HEK293 (cell line): ENCODE measurements at regions of chr7 and their contacts with region 1.

Region 1: DNA sequence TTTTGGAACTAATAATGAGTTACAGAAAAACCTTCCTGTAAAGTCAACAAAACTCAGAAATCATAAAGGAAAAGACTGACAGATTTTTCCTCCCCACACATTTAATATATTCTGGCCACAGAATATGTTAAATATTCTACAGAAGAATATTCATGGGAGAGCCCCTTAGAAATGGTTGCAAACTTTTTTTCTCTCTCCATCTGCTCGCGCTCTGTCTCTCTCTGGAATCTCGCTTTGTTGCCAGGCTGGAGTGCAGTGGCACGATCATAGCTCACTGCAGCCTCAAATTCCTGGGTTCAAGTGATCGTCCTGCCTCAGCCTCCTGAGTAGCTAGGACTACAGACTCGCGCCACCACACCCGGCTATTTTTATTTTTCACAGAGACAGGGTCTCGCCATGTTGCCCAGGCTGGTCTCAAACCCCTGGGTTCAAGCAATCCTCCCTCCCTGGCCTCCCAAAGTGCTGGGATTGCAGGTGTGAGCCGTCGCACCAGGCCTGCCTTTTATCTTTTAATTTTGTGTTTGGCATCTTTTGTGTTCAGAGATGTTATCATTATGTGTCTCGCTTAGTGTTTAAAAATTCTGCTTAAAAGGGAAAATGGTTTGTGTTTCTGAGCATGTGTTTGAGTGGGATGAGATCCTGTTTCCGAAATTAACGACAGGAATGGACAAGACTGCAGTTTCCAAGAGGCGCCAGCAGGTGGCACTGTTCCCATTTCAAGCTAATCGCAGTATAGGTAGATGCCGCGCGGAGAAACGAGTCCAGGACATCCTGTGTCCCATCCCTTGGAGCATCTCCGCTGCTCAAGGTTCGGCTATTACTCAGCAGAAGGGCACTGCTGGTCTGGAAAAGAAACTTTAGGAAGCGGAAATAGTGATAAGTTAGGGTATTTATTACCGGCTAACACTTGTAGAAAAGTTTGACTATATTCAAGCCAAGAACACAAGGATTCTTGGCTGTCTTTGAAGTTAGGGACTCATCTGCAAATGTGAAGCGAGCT is 23.1 kb upstream of the ST7 start:
- H3K4me3 ChIP-seq: no peak overlapping the region
- H3K27ac ChIP-seq: no peak overlapping the region
- H3K4me1 ChIP-seq: no peaks in the 10 kb centered on the region
- CTCF ChIP-seq: peak; percentile 69; the same call in 1 of the 2 replicates

Region 2: DNA sequence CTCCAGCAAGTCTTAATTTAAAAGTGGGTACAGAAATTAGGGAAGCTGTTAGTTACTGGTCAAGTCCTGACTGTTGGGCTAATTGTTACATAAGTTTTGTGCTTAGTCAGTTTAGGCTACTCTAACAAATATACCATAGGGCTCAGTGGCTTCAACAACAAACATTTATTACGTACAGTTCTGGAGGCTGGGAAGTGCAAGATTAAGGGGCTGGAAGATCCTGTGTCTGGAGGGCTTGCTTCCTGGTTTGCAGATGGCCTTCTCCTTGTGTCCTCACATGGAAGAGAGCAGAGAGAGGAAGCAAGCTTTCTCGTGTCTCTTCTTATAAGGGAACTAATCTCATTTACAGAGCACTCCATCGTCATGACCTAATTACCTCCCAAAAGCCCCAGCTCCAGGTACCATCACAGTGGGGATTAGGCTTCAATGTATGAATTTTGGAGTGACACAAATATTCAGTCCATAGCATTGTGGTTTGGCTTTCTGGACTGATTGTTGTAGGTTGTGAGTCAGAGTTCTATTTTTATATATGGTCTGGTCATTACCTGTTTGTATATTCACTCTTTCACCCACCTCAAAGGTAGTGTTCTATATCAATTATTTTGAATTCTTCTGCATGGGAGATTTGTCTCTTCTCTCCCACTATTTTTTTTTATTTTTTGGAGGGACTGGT is 40.2 kb after region 1 on chr7:
- CTCF ChIA-PET with region 1: no interaction called
- POLR2A ChIA-PET with region 1: no interaction called
- H3K4me3 ChIP-seq: no peak overlapping the region
- H3K27ac ChIP-seq: no peak overlapping the region
- H3K4me1 ChIP-seq: no peaks in the 10 kb centered on the region
- CTCF ChIP-seq: no peak

Region 3: GRCh38 chr7:117119192-117119924 is 189.1 kb after region 1 on chr7:
- CTCF ChIA-PET with region 1: interaction called, 32 read pairs
- POLR2A ChIA-PET with region 1: no interaction called
- H3K4me3 ChIP-seq: no peak overlapping the region
- H3K27ac ChIP-seq: no peak overlapping the region
- H3K4me1 ChIP-seq: peaks cover 11% of the 10 kb centered on the region; the same call in 1 of the 2 replicates
- CTCF ChIP-seq: peak; percentile 51; the same call in 1 of the 2 replicates

Region 4: DNA sequence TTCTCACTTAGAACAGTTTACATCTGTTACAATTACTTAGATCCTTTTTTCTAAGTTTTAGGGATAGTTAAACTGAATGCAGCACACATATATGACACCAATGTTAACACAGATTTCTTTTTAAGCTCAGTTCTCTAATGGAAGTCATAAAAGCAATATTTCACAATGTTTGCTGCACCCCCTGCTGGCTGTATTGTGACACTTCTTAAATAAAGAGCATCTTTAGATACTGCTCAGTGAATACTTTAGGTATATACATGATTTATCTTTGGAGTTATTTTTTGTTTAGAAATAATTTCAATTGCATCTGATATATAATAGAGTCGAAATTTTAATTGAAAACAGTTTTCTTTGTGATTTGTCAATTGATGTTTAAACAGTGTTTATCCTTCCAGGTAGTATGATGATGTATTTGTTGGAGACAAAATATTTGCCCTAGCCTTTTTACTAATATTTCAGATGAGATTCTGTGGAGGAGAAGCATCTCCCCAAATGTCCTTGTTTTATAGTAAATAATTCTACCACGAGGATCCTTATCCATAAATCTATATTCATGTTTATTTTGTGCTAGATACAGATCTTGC is 197.5 kb after region 1 on chr7:
- CTCF ChIA-PET with region 1: interaction called, 32 read pairs
- POLR2A ChIA-PET with region 1: no interaction called
- H3K4me3 ChIP-seq: no peak overlapping the region
- H3K27ac ChIP-seq: no peak overlapping the region
- H3K4me1 ChIP-seq: peaks cover 19% of the 10 kb centered on the region
- CTCF ChIP-seq: 0 out of 2 replicates have a peak, but pooled peaks have one; percentile 18

Region 5: DNA sequence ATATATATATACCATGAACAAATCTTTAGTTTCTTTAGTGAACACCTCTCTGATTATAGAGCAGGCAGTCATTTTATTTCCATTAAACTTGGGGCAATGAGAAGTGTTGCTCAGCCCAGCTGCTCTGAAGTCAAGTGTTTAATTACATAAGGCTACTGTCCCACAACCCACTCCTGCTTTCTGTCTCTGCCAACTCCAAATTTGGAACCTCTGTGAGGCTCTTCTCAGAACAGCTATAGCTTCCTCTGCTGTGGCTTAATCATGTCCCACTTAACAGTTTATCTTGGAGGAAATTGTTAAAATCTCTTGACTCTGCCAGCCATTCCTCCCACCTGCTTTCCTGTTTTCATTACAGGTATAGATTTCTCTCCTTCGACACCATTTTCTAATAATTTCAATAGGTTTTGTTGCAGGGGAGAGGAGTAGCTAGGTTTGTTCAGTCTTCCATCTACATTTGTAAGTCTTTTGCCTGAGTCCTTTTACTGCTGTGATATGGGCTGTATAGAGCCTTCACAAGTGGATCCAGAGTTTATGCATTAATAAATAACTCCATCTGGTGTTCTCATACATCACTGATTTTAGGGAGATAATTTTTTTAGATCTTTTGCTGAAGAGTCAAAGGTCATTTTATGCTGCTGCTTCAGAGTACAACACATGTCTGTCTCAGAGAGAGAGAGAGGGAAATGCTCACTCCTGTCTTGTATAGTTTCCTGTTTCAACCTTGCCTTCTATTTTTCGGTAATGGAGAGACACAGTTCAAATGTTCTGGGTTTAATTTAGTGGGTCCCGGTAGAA is 222.2 kb after region 1 on chr7:
- CTCF ChIA-PET with region 1: no interaction called
- POLR2A ChIA-PET with region 1: no interaction called
- H3K4me3 ChIP-seq: no peak overlapping the region
- H3K27ac ChIP-seq: no peak overlapping the region
- H3K4me1 ChIP-seq: no peaks in the 10 kb centered on the region; the same call in 1 of the 2 replicates
- CTCF ChIP-seq: no peak